Panc1 (cell line): ENCODE measurements at regions of chr10 and their contacts with region 1.

Region 1: GRCh38 chr10:132939957-132940790 is 2.2 kb downstream of the CFAP46 start:
- DNase-seq: peak; percentile 27
- ATAC-seq: peak; percentile 67
- H3K4me3 ChIP-seq: no peak overlapping the region
- H3K27ac ChIP-seq: no peak overlapping the region
- H3K4me1 ChIP-seq: peaks cover 3% of the 10 kb centered on the region; the same call in 1 of the 2 replicates
- H3K27me3 ChIP-seq: no peaks in the 10 kb centered on the region; the same call in 1 of the 2 replicates
- CTCF ChIP-seq: peak; percentile 100

Region 2: DNA sequence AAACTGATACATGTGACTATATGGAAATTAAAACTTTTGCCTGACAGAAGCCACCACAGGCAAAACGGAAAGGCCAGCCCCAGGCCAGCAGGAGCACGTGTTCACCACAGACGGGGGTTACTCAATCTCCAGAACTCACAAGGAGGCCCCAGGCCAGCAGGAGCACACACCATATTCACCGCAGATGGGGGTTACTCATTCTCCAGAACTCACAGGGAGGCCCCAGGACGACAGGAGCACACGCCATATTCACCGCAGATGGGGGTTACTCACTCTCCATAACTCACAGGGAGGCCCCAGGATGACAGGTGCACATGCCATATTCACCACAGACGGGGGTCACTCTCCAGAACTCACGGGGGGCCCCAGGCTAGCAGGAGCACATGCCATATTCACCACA is 215.7 kb before region 1 on chr10:
- CTCF ChIA-PET with region 1: no interaction called
- POLR2A ChIA-PET with region 1: no interaction called
- in situ Hi-C with region 1: no loop called
- intact Hi-C with region 1: no loop called
- DNase-seq: no peak
- ATAC-seq: no peak
- H3K4me3 ChIP-seq: no peak overlapping the region
- H3K27ac ChIP-seq: no peak overlapping the region
- H3K4me1 ChIP-seq: no peaks in the 10 kb centered on the region
- H3K27me3 ChIP-seq: no peaks in the 10 kb centered on the region
- CTCF ChIP-seq: no peak

Region 3: GRCh38 chr10:132826524-132827422 is 113.4 kb before region 1 on chr10:
- CTCF ChIA-PET with region 1: no interaction called
- POLR2A ChIA-PET with region 1: no interaction called
- in situ Hi-C with region 1: no loop called
- intact Hi-C with region 1: no loop called
- DNase-seq: no peak
- ATAC-seq: no peak
- H3K4me3 ChIP-seq: no peak overlapping the region
- H3K27ac ChIP-seq: no peak overlapping the region
- H3K4me1 ChIP-seq: no peaks in the 10 kb centered on the region
- H3K27me3 ChIP-seq: peaks cover 13% of the 10 kb centered on the region
- CTCF ChIP-seq: no peak

Region 4: DNA sequence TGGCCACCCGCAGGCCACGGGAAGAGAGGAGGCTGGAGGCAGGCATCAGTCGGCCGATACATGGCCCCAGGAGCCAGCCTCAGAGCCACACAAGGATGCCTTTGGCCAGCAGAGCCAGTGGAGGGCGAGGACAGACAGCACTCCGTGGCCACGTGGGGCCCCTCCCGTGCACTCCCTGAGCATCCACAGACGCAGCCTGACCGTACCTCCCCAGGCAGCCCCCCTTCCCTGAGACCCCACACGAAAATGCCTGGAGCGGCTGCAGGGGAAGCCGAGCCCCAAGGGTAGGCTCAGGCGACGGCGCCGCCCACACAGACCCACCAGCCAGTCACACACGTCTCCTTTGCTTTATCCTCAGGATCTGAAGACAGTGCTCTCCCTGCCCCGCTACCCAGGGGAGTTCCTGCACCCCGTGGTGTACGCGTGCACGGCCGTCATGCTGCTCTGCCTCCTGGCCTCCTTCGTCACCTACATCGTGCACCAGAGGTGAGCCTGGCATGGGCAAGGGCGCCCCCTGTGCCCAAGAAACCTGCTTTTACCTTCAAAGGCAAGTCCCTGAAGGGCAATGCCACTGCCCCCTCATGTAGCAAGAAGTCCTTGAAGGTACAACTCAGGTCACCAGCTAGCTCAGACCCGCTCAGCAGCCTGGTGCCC is 156.6 kb after region 1 on chr10:
- CTCF ChIA-PET with region 1: no interaction called
- POLR2A ChIA-PET with region 1: no interaction called
- in situ Hi-C with region 1: no loop called
- intact Hi-C with region 1: loop called (anchors 10 kb)
- DNase-seq: no peak
- ATAC-seq: peak; percentile 39; the same call in 1 of the 2 replicates
- H3K4me3 ChIP-seq: no peak overlapping the region
- H3K27ac ChIP-seq: no peak overlapping the region
- H3K4me1 ChIP-seq: no peaks in the 10 kb centered on the region
- H3K27me3 ChIP-seq: peaks cover 26% of the 10 kb centered on the region
- CTCF ChIP-seq: peak; percentile 78; the same call in 1 of the 2 replicates

Region 5: GRCh38 chr10:133124357-133125211 is 184.4 kb after region 1 on chr10:
- CTCF ChIA-PET with region 1: interaction called, 3 read pairs
- POLR2A ChIA-PET with region 1: no interaction called
- in situ Hi-C with region 1: no loop called
- intact Hi-C with region 1: loop called (anchors 2 kb)
- DNase-seq: no peak
- ATAC-seq: peak; percentile 77
- H3K4me3 ChIP-seq: no peak overlapping the region
- H3K27ac ChIP-seq: no peak overlapping the region
- H3K4me1 ChIP-seq: no peaks in the 10 kb centered on the region; the same call in 1 of the 2 replicates
- H3K27me3 ChIP-seq: no peaks in the 10 kb centered on the region; the same call in 1 of the 2 replicates
- CTCF ChIP-seq: peak; percentile 89